ENCODE measurements at regions of chr14 and their contacts with region 1.

Region 1: GRCh38 chr14:91418387-91419043 is 895 bp upstream of the CCDC88C start:
- DNase-seq: peak; percentile 81 to 92
- ATAC-seq: peak; percentile 32 to 61 (median 36)
- H3K4me3 ChIP-seq: peak overlapping the region; percentile 27
- H3K4me3 Mint-ChIP-seq: peak overlapping the region; percentile 55
- H3K27ac ChIP-seq: peak overlapping the region; percentile 70
- H3K27ac Mint-ChIP-seq: peak overlapping the region; percentile 80 to 99
- H3K4me1 ChIP-seq: peaks cover 37% of the 10 kb centered on the region
- H3K4me1 Mint-ChIP-seq: peaks cover 39 to 45% of the 10 kb centered on the region in 2 donors
- H3K27me3 ChIP-seq: no peaks in the 10 kb centered on the region
- H3K27me3 Mint-ChIP-seq: no peaks in the 10 kb centered on the region
- CTCF ChIP-seq: peak; percentile 98

Region 2: GRCh38 chr14:91009501-91010152 is 408.9 kb before region 1 on chr14:
- intact Hi-C with region 1: no loop called
- DNase-seq: peak in 1 of 2 donors; percentile 53
- ATAC-seq: peak; percentile 42 to 80 (median 69)
- H3K4me3 ChIP-seq: no peak overlapping the region
- H3K4me3 Mint-ChIP-seq: peak overlapping the region; percentile 10
- H3K27ac ChIP-seq: peak overlapping the region; percentile 32
- H3K27ac Mint-ChIP-seq: peak overlapping the region; percentile 14 to 63
- H3K4me1 ChIP-seq: peaks cover 7% of the 10 kb centered on the region
- H3K4me1 Mint-ChIP-seq: peaks cover 31 to 35% of the 10 kb centered on the region in 2 donors
- H3K27me3 ChIP-seq: no peaks in the 10 kb centered on the region
- H3K27me3 Mint-ChIP-seq: no peaks in the 10 kb centered on the region
- CTCF ChIP-seq: no peak

Region 3: GRCh38 chr14:91323671-91324605 is 94.6 kb before region 1 on chr14:
- intact Hi-C with region 1: loop called (anchors 1 kb)
- DNase-seq: peak; percentile 95
- ATAC-seq: peak; percentile 76 to 94 (median 82)
- H3K4me3 ChIP-seq: peak overlapping the region; percentile 11
- H3K4me3 Mint-ChIP-seq: peak overlapping the region; percentile 94
- H3K27ac ChIP-seq: peak overlapping the region; percentile 94
- H3K27ac Mint-ChIP-seq: peak overlapping the region; percentile 100
- H3K4me1 ChIP-seq: peaks cover 67% of the 10 kb centered on the region
- H3K4me1 Mint-ChIP-seq: peaks cover 48 to 59% of the 10 kb centered on the region in 2 donors
- H3K27me3 ChIP-seq: no peaks in the 10 kb centered on the region
- H3K27me3 Mint-ChIP-seq: no peaks in the 10 kb centered on the region
- CTCF ChIP-seq: peak; percentile 93

Region 4: GRCh38 chr14:91350813-91351511 is 67.6 kb before region 1 on chr14:
- intact Hi-C with region 1: loop called (anchors 1 kb)
- DNase-seq: peak; percentile 46 to 87
- ATAC-seq: peak; percentile 54 to 75 (median 72)
- H3K4me3 ChIP-seq: peak overlapping the region; percentile 6
- H3K4me3 Mint-ChIP-seq: peak overlapping the region; percentile 90
- H3K27ac ChIP-seq: peak overlapping the region; percentile 86
- H3K27ac Mint-ChIP-seq: peak overlapping the region; percentile 96 to 97
- H3K4me1 ChIP-seq: peaks cover 92% of the 10 kb centered on the region
- H3K4me1 Mint-ChIP-seq: peaks cover 89 to 94% of the 10 kb centered on the region in 2 donors
- H3K27me3 ChIP-seq: no peaks in the 10 kb centered on the region
- H3K27me3 Mint-ChIP-seq: no peaks in the 10 kb centered on the region
- CTCF ChIP-seq: no peak

Region 5: DNA sequence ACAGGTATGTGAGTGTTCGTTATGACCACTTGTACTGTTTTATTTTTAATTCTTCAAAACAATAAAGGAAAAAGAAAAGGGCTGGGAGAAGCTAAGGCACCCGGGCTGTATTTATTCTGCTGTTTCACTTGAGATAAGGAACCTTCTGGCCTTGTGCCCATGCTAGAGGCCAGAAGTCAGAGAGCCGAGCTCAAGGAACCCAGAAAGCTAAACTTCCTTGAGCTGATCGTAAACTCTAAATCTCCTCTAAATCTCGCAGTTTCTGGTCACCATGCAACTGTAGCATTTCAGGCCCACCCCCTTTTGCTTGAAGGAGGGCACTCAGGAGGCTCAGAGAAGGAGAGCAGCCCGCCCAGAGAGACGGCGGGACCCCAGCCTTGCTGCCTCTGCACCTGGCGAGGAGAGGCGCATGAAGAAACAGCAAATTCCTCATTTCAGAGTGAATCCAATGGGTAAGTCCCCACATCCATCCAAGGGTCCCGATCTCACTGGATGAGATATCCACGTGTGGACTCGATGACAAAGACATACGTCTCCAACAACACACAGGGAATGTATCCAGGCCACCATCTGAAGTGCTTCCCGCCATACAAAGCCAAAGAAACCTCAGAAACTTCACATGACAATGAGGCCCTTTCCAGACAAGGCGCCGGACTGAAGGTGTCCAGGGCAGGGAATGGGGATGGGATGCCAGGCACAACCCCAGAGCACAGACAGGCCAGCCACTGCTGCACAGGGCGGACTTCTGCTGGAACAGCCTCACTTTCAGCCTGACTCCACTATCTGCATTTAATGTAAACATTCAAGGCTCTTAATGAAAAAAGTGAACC is 15.5 kb before region 1 on chr14:
- intact Hi-C with region 1: loop called (anchors 2 kb)
- DNase-seq: peak in 1 of 2 donors; percentile 59
- ATAC-seq: peak; percentile 39 to 64 (median 43)
- H3K4me3 ChIP-seq: peak overlapping the region; percentile 26
- H3K4me3 Mint-ChIP-seq: peak overlapping the region; percentile 87
- H3K27ac ChIP-seq: peak overlapping the region; percentile 90
- H3K27ac Mint-ChIP-seq: peak overlapping the region; percentile 96 to 98
- H3K4me1 ChIP-seq: peaks cover 95% of the 10 kb centered on the region
- H3K4me1 Mint-ChIP-seq: peaks cover 86 to 91% of the 10 kb centered on the region in 2 donors
- H3K27me3 ChIP-seq: no peaks in the 10 kb centered on the region
- H3K27me3 Mint-ChIP-seq: no peaks in the 10 kb centered on the region
- CTCF ChIP-seq: no peak

Region 6: GRCh38 chr14:91510174-91511042 is 91.9 kb after region 1 on chr14 and contains the start of gene PPP4R3A:
- intact Hi-C with region 1: loop called (anchors 2 kb)
- DNase-seq: peak; percentile 92 to 98
- ATAC-seq: peak; percentile 83 to 93 (median 84)
- H3K4me3 ChIP-seq: peak within 1 kb of the TSS; percentile 100
- H3K4me3 Mint-ChIP-seq: peak within 1 kb of the TSS; percentile 100
- H3K27ac ChIP-seq: peak within 1 kb of the TSS; percentile 99
- H3K27ac Mint-ChIP-seq: peak within 1 kb of the TSS; percentile 99 to 100
- H3K4me1 ChIP-seq: peaks cover 25% of the 10 kb centered on the region
- H3K4me1 Mint-ChIP-seq: peaks cover 18 to 35% of the 10 kb centered on the region in 2 donors
- H3K27me3 ChIP-seq: no peaks in the 10 kb centered on the region
- H3K27me3 Mint-ChIP-seq: no peaks in the 10 kb centered on the region
- CTCF ChIP-seq: no peak
- total RNA-seq, gene PPP4R3A: 168 to 216 (median 180) TPM